Gastrocnemius medialis (tissue), 4 donors: ENCODE measurements at regions of chr3 and their contacts with region 1.

Region 1: DNA sequence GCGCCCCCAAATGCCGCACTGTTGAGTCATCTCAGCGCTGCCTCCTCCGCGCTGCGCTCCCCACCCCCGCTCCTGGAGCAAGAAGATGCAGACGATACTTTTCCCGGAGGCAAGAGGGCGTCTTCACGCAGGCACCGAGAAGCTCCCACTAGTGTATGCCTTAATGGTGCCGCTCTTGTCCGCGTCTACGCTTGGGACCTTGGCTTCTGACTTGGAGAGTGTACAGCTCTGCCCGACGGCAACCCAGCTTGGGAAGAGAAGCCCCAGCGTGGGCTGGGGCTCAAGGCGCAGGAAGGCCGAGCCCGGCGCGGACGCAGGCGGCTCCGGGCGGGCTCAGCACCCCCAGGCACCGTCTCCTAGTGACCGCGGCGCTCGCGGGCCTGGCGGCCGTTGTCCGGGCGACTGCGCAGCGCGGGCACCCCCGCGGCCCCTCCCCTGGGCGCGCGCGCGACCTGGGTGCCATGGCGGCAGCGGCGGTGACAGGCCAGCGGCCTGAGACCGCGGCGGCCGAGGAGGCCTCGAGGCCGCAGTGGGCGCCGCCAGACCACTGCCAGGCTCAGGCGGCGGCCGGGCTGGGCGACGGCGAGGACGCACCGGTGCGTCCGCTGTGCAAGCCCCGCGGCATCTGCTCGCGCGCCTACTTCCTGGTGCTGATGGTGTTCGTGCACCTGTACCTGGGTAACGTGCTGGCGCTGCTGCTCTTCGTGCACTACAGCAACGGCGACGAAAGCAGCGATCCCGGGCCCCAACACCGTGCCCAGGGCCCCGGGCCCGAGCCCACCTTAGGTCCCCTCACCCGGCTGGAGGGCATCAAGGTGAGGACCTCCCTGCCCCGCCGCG is at the start of gene P4HTM:
- DNase-seq: peak; percentile 62 to 80
- ATAC-seq: peak; percentile 82
- H3K4me3 ChIP-seq: peak within 1 kb of the TSS; percentile 79 to 86 (median 84)
- H3K27ac ChIP-seq: peak within 1 kb of the TSS; percentile 79 to 89 (median 86)
- H3K4me1 ChIP-seq: peaks cover 27 to 36% of the 10 kb centered on the region in 2 donors
- H3K27me3 ChIP-seq: no peaks in the 10 kb centered on the region
- CTCF ChIP-seq: peak in 3 of 5 experiments; percentile 30 to 49 (median 42)
- POLR2A ChIP-seq: peak in 1 of 2 donors; percentile 36
- total RNA-seq, gene P4HTM: 13.6 to 21.7 (median 20.3) TPM

Region 2: GRCh38 chr3:49007068-49007770 is 17.2 kb after region 1 on chr3 and contains the start of gene WDR6:
- in situ Hi-C with region 1: no loop called
- intact Hi-C with region 1: loop called (anchors 1 kb)
- DNase-seq: peak; percentile 97 to 98
- ATAC-seq: peak; percentile 91 to 94
- H3K4me3 ChIP-seq: peak within 1 kb of the TSS; percentile 85 to 99 (median 97)
- H3K27ac ChIP-seq: peak within 1 kb of the TSS; percentile 95 to 100 (median 99)
- H3K4me1 ChIP-seq: peaks cover 15 to 26% of the 10 kb centered on the region in 2 donors
- H3K27me3 ChIP-seq: no peaks in the 10 kb centered on the region
- CTCF ChIP-seq: peak; percentile 33 to 66 (median 58)
- POLR2A ChIP-seq: peak; percentile 74 to 80
- total RNA-seq, gene WDR6: 40.4 to 50.9 (median 45.5) TPM

Region 3: GRCh38 chr3:49028673-49029562 is 38.9 kb after region 1 on chr3 and contains the start of gene IMPDH2:
- in situ Hi-C with region 1: no loop called
- intact Hi-C with region 1: loop called (anchors 2 kb)
- DNase-seq: peak; percentile 83 to 92
- ATAC-seq: peak; percentile 94
- H3K4me3 ChIP-seq: peak within 1 kb of the TSS; percentile 70 to 86 (median 86)
- H3K27ac ChIP-seq: peak within 1 kb of the TSS; percentile 94 to 98 (median 96)
- H3K4me1 ChIP-seq: peaks cover 22 to 31% of the 10 kb centered on the region in 2 donors
- H3K27me3 ChIP-seq: no peaks in the 10 kb centered on the region
- CTCF ChIP-seq: peak in 2 of 5 experiments; percentile 21 to 23
- POLR2A ChIP-seq: peak; percentile 98
- total RNA-seq, gene IMPDH2: 178 to 229 (median 205) TPM

Region 4: GRCh38 chr3:49213541-49213943 is 223.5 kb after region 1 on chr3:
- in situ Hi-C with region 1: no loop called
- intact Hi-C with region 1: no loop called
- DNase-seq: no peak
- ATAC-seq: no peak
- H3K4me3 ChIP-seq: no peak overlapping the region
- H3K27ac ChIP-seq: no peak overlapping the region
- H3K4me1 ChIP-seq: peaks cover 9 to 10% of the 10 kb centered on the region in 2 donors
- H3K27me3 ChIP-seq: no peaks in the 10 kb centered on the region
- CTCF ChIP-seq: no peak
- POLR2A ChIP-seq: no peak